ENCODE measurements at regions of chr15 and their contacts with region 1.

Region 1: DNA sequence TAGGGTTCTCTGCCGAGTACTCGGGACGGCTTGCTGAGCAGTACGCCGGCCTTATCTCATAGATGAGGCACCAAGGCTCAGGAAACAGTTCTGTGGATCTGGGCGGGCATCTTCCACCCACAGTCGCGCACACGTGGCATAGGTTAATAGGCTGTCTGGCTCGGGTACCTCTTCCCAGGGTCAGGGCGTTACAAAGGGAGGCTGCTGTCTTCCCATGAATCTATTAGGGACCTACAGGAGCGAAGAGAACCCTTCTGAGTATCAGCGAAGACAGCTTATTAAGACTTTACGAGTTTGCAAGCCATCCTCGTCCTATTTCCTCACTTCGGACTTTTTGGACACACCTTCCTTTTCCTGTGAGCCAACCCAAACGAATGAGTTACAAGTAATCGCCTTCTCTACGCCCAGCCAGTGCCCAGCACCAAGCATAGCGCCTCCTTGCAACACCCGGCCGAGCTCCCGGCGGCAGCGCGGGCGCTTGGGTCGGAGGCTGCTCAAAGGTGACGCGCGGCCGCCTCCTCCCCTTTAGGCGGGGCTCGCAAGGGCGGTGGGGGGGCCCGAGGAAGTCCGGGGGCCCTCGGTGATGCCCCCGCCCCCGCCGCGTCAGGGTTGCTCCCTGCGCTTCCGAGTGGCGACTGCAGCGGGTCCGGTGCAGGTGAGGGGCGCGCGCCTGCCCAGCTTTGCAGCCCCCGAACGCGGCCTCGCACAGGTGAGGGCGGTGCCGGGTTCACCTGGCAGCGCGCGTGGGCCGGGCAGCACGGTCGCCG is at the start of gene MCTP2:
- DNase-seq: peak; percentile 95
- H3K4me3 Mint-ChIP-seq: peak within 1 kb of the TSS; percentile 75
- H3K27ac Mint-ChIP-seq: peak within 1 kb of the TSS; percentile 85
- H3K4me1 Mint-ChIP-seq: peaks cover 33% of the 10 kb centered on the region
- H3K27me3 Mint-ChIP-seq: no peaks in the 10 kb centered on the region
- CTCF ChIP-seq: no peak
- total RNA-seq, gene MCTP2: 20.5 and 25.7 TPM in 2 replicates

Region 2: DNA sequence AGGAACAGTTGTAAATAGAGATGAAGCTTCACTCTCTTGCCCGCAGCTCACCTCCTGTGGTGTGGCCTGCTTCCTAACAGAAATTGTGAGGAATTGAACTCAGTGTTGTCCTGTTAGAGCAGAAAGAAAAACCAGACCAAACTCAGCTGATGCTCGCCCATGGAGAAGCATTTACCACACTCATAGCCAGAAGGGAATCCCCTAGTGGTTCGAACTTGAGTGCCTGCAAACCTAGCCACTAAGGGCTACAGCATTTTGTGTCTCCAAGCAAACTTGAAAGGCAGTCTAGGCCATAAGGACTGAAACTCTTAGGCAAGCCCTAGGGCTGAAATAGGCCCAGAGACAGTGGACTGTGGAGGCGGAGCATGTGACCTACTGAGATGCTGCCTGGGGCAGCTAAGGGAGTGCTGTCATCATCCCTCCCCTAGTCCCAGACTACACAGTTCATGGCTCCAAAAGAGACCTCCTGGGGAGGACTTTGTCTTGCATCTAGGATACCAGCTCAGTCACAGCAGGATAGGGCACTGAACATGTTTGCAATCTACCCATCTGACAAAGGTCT is 44.3 kb before region 1 on chr15:
- CTCF ChIA-PET with region 1: no interaction called
- POLR2A ChIA-PET with region 1: no interaction called
- intact Hi-C with region 1: no loop called
- DNase-seq: no peak
- H3K4me3 Mint-ChIP-seq: no peak overlapping the region
- H3K27ac Mint-ChIP-seq: no peak overlapping the region
- H3K4me1 Mint-ChIP-seq: peaks cover under 1% of the 10 kb centered on the region
- H3K27me3 Mint-ChIP-seq: no peaks in the 10 kb centered on the region
- CTCF ChIP-seq: no peak

Region 3: GRCh38 chr15:94247789-94248638 is 16.9 kb after region 1 on chr15:
- CTCF ChIA-PET with region 1: no interaction called
- POLR2A ChIA-PET with region 1: interaction called, 27 read pairs
- intact Hi-C with region 1: no loop called
- DNase-seq: no peak
- H3K4me3 Mint-ChIP-seq: no peak overlapping the region
- H3K27ac Mint-ChIP-seq: no peak overlapping the region
- H3K4me1 Mint-ChIP-seq: peaks cover 7% of the 10 kb centered on the region
- H3K27me3 Mint-ChIP-seq: no peaks in the 10 kb centered on the region
- CTCF ChIP-seq: no peak

Region 4: GRCh38 chr15:94263341-94264273 is 32.5 kb after region 1 on chr15:
- CTCF ChIA-PET with region 1: interaction called, 4 read pairs
- POLR2A ChIA-PET with region 1: interaction called, 51 read pairs
- intact Hi-C with region 1: no loop called
- DNase-seq: peak; percentile 44
- H3K4me3 Mint-ChIP-seq: no peak overlapping the region
- H3K27ac Mint-ChIP-seq: peak overlapping the region; percentile 68
- H3K4me1 Mint-ChIP-seq: peaks cover 40% of the 10 kb centered on the region
- H3K27me3 Mint-ChIP-seq: no peaks in the 10 kb centered on the region
- CTCF ChIP-seq: no peak

Region 5: GRCh38 chr15:94451466-94451865 is 220.3 kb after region 1 on chr15:
- CTCF ChIA-PET with region 1: no interaction called
- POLR2A ChIA-PET with region 1: no interaction called
- intact Hi-C with region 1: no loop called
- DNase-seq: no peak
- H3K4me3 Mint-ChIP-seq: no peak overlapping the region
- H3K27ac Mint-ChIP-seq: peak overlapping the region; percentile 51
- H3K4me1 Mint-ChIP-seq: no peaks in the 10 kb centered on the region
- H3K27me3 Mint-ChIP-seq: no peaks in the 10 kb centered on the region
- CTCF ChIP-seq: no peak

Measured in MCF 10A (cell line).